ENCODE measurements at regions of chr5 and their contacts with region 1.

Region 1: DNA sequence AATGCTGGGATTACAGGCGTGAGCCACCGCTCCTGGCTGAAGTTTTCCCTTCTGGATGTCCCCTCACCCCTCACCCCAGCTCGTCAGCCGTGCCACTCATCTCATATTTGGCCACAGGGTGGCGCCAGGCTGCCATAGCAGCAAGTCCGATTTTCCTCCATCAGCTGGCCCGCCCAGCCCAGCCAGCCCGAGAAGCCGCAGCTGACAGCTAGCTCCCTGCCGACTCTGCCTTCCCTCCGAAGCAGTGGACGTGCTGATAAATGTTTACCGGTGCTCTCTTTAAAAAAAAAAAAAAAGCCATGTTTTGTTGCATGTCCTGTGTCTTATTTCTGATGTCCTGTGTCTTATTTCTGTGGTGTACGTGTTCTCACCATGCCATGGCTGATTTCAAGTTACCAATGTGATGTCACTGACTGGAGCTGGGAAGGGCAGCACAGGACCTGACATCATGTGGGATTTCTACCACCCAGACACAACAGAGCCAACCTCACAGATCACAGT is 58.3 kb downstream of the PFDN1 start:
- DNase-seq: no peak
- ATAC-seq: peak; percentile 75
- H3K4me3 ChIP-seq: no peak overlapping the region
- H3K27ac ChIP-seq: no peak overlapping the region
- H3K4me1 ChIP-seq: peaks cover 36% of the 10 kb centered on the region
- H3K27me3 ChIP-seq: no peaks in the 10 kb centered on the region
- CTCF ChIP-seq: peak; percentile 96

Region 2: GRCh38 chr5:140232731-140233130 is 11.8 kb before region 1 on chr5:
- CTCF ChIA-PET with region 1: no interaction called
- POLR2A ChIA-PET with region 1: no interaction called
- in situ Hi-C with region 1: no loop called
- intact Hi-C with region 1: no loop called
- DNase-seq: no peak
- ATAC-seq: no peak
- H3K4me3 ChIP-seq: no peak overlapping the region
- H3K27ac ChIP-seq: no peak overlapping the region
- H3K4me1 ChIP-seq: no peaks in the 10 kb centered on the region
- H3K27me3 ChIP-seq: no peaks in the 10 kb centered on the region
- CTCF ChIP-seq: no peak

Region 3: DNA sequence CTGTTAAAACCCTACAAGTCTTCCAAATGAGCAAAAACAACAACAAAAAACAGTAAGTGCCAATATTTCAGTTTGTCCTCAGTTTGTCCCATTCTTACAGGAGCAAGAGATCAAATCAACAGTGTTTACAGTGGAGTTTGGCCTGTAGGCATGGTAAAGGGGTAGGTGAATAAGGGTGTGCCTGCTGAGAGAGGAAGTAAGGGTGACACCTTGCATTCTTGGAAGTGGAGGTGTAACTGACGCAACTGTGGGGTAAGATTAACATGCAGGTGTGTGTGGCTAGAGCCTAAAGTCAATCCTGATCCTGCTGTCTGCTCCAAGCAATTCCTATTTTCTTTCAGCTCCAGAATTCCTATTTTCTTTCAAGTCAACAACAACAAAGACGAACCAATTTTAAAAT is 14.9 kb after region 1 on chr5:
- CTCF ChIA-PET with region 1: interaction called, 12 read pairs
- POLR2A ChIA-PET with region 1: no interaction called
- in situ Hi-C with region 1: no loop called
- intact Hi-C with region 1: no loop called
- DNase-seq: no peak
- ATAC-seq: no peak
- H3K4me3 ChIP-seq: no peak overlapping the region
- H3K27ac ChIP-seq: no peak overlapping the region
- H3K4me1 ChIP-seq: peaks cover 20% of the 10 kb centered on the region
- H3K27me3 ChIP-seq: no peaks in the 10 kb centered on the region
- CTCF ChIP-seq: no peak

Region 4: DNA sequence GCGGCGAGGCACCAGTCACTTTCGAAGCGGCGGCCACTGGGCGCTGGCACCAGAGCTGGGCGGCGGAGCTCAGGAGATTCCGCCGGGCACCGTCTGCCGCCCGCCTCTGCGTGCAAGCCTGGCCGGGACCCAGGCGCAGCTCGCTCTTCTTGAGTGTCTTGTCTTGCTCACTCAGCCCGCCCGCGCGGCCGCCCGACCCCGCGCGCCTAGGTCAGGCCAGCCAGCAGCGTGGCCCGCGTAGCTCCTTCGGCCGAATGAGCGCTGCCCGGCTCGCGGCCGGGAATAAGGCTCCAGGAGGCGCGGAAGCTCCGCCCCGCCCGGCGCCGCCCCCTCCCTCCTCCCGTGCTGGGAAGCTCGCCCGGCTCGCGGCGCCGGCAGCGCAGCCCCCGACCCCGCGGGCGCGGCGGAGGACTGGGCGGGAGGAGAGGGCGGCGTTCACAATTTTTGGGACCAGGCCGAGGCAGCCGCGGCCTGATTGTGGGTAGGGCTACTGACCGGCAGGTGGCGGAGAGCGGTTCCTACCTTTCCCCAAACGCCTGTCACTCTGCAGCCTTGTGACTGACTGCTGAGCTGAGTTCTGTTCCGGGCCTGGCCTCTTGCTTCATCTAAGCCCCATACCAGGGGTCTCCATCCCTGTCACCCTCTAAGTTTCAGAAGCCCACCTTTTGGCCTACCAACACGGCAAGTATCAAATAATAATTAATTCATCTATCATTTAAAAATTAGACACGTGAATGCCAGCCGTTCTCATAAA is 102.0 kb after region 1 on chr5 and contains the start of gene HBEGF:
- CTCF ChIA-PET with region 1: interaction called, 79 read pairs
- POLR2A ChIA-PET with region 1: no interaction called
- in situ Hi-C with region 1: no loop called
- intact Hi-C with region 1: loop called (anchors 2 kb)
- DNase-seq: peak; percentile 46
- ATAC-seq: peak; percentile 93
- H3K4me3 ChIP-seq: peak within 1 kb of the TSS; percentile 63 to 68
- H3K27ac ChIP-seq: peak within 1 kb of the TSS; percentile 63; the same call in 1 of the 2 replicates
- H3K4me1 ChIP-seq: peaks cover 14% of the 10 kb centered on the region
- H3K27me3 ChIP-seq: no peaks in the 10 kb centered on the region
- CTCF ChIP-seq: peak; percentile 59
- total RNA-seq, gene HBEGF: 5.0 TPM

Region 5: GRCh38 chr5:140351609-140352334 is 107.2 kb after region 1 on chr5:
- CTCF ChIA-PET with region 1: interaction called, 79 read pairs
- POLR2A ChIA-PET with region 1: no interaction called
- in situ Hi-C with region 1: no loop called
- intact Hi-C with region 1: loop called (anchors 2 kb)
- DNase-seq: peak; percentile 66
- ATAC-seq: peak; percentile 80
- H3K4me3 ChIP-seq: no peak overlapping the region
- H3K27ac ChIP-seq: no peak overlapping the region
- H3K4me1 ChIP-seq: peaks cover 6% of the 10 kb centered on the region
- H3K27me3 ChIP-seq: no peaks in the 10 kb centered on the region
- CTCF ChIP-seq: peak; percentile 84

Region 6: DNA sequence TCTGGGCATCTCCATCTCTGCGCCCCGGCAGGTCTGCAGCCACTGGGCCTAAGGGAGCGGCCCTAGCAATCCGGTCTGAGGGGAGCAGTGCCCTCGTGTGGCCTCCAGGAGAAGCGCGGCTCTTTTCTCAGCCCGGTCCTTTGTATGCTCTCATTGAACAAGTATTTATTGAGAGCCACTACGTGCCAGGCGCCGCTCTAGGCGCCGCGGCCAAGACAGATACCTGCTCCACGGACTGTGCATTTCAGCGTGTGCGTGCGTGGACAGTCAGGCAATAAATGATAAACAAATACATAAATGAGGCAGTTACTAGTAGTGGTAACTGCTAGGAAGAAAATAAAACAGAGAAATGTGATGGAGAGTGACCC is 113.1 kb after region 1 on chr5:
- CTCF ChIA-PET with region 1: interaction called, 27 read pairs
- POLR2A ChIA-PET with region 1: interaction called, 3 read pairs
- in situ Hi-C with region 1: no loop called
- intact Hi-C with region 1: loop called (anchors 2 kb)
- DNase-seq: peak; percentile 74
- ATAC-seq: peak; percentile 94
- H3K4me3 ChIP-seq: peak overlapping the region; percentile 7 to 52; a peak in 3 of 4 replicates
- H3K27ac ChIP-seq: no peak overlapping the region
- H3K4me1 ChIP-seq: no peaks in the 10 kb centered on the region
- H3K27me3 ChIP-seq: no peaks in the 10 kb centered on the region
- CTCF ChIP-seq: peak; percentile 96

Region 7: DNA sequence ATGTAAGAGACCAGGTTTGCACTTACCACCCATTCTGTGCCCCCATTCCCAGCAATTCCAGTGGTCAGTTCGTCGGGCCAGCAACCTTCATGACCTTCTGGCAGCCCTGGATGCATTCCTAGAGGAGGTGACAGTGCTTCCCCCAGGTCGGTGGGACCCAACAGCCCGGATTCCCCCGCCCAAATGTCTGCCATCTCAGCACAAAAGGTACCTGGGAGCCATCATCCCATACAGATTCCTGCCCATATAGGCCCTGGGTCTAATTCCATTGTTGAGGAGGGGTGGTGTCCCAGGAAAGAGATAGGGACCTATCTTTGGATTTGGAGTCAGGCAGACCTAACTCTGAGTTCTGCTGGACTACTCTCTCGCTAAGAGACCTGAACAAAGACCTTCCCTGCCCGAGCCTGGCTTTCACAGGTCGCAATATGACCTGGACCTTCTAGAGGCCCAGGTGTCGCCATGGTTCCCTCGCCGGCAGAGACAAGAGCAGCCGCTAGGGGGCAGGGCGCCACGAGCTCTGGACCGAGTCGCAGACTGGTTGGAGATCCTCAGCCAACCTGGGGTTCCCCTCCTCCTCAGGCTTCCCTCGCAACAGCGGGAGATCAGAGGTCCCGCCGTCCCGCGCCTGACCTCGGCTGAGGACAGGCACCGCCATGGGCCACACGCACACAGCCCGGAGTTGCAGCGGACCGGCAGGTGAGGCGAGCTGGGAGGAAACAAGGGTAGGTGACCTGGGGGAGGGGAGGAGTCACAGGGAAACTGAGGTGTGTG is 118.5 kb after region 1 on chr5:
- CTCF ChIA-PET with region 1: interaction called, 14 read pairs
- POLR2A ChIA-PET with region 1: interaction called, 3 read pairs
- in situ Hi-C with region 1: no loop called
- intact Hi-C with region 1: no loop called
- DNase-seq: peak; percentile 41
- ATAC-seq: peak; percentile 87
- H3K4me3 ChIP-seq: peak overlapping the region in 1 of 2 experiments; percentile 41; a peak in 2 of 4 replicates
- H3K27ac ChIP-seq: no peak overlapping the region
- H3K4me1 ChIP-seq: no peaks in the 10 kb centered on the region
- H3K27me3 ChIP-seq: no peaks in the 10 kb centered on the region
- CTCF ChIP-seq: peak; percentile 98

Region 8: GRCh38 chr5:140408750-140409256 is 164.2 kb after region 1 on chr5:
- CTCF ChIA-PET with region 1: no interaction called
- POLR2A ChIA-PET with region 1: no interaction called
- in situ Hi-C with region 1: no loop called
- intact Hi-C with region 1: no loop called
- DNase-seq: no peak
- ATAC-seq: peak; percentile 86
- H3K4me3 ChIP-seq: no peak overlapping the region
- H3K27ac ChIP-seq: no peak overlapping the region
- H3K4me1 ChIP-seq: peaks cover 24% of the 10 kb centered on the region
- H3K27me3 ChIP-seq: no peaks in the 10 kb centered on the region
- CTCF ChIP-seq: no peak